Colonic mucosa (tissue), 4 donors: ENCODE measurements at regions of chr2 and their contacts with region 1.

Region 1: DNA sequence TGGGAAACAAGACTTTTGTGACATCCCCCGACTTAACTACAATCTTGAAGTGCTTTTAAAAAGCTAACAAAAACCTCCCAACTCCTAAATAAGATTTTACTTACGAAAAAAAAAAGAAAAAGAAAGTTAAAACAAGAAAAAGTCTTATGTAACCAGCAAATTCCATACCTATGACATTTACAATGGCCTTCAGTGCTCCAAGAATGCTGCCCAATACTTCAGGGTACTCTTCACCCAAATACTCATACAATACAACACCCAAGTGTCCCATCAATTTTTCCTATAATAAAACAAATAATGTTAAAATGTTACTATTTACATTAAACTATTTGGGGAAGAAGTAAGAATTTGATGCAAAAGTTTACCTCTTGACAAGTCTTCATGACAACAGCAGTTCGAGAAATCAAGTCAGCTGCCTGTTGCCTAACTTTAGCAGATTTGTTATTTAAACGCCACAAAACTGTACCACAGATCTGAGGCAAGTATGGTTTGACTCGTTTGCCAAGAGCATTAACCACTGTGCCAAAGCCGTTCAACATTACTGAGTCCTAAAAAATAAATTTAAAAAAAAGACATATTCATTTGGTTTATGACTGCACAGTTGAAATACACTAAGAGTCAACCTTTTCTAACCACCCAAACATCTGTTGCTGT is 34.8 kb downstream of the SF3B1 start:
- DNase-seq: no peak
- H3K4me3 ChIP-seq: no peak overlapping the region
- H3K27ac ChIP-seq: no peak overlapping the region
- H3K4me1 ChIP-seq: no peaks in the 10 kb centered on the region
- H3K27me3 ChIP-seq: no peaks in the 10 kb centered on the region
- CTCF ChIP-seq: no peak

Region 2: GRCh38 chr2:196783431-196784094 is 616.5 kb before region 1 on chr2:
- intact Hi-C with region 1: loop called (anchors 10 kb)
- DNase-seq: no peak
- H3K4me3 ChIP-seq: no peak overlapping the region
- H3K27ac ChIP-seq: no peak overlapping the region
- H3K4me1 ChIP-seq: no peaks in the 10 kb centered on the region
- H3K27me3 ChIP-seq: no peaks in the 10 kb centered on the region
- CTCF ChIP-seq: no peak

Region 3: DNA sequence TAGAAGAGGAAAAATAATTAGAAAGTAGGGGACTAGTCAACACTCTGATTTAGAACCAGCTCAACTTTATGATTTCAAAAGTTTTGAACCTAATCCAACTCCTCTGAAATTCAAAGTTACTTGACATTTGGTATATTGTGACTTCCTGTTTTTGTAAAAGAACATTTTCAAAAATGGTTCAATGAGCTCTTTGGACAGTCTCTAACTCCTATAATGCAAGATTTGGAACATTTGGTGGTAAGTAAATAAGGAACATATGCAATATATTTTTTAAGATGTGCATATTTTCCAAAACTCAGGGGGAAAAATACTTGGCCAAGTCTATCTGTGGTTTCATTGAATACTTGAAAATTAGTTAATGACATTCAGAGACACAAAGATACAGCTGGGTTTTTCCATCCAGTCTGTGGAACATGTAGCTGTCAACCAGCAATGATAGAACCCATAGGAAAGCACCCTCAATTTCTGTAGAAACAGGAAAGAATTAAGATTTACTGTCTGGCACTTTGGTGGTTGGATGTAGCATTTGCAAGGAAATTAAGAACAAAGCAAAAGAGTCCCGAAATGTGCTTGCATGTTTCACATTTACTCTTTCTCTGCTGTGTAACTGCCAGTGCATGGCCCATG is 72.4 kb before region 1 on chr2:
- intact Hi-C with region 1: no loop called
- DNase-seq: no peak
- H3K4me3 ChIP-seq: no peak overlapping the region
- H3K27ac ChIP-seq: no peak overlapping the region
- H3K4me1 ChIP-seq: no peaks in the 10 kb centered on the region
- H3K27me3 ChIP-seq: no peaks in the 10 kb centered on the region
- CTCF ChIP-seq: no peak

Region 4: DNA sequence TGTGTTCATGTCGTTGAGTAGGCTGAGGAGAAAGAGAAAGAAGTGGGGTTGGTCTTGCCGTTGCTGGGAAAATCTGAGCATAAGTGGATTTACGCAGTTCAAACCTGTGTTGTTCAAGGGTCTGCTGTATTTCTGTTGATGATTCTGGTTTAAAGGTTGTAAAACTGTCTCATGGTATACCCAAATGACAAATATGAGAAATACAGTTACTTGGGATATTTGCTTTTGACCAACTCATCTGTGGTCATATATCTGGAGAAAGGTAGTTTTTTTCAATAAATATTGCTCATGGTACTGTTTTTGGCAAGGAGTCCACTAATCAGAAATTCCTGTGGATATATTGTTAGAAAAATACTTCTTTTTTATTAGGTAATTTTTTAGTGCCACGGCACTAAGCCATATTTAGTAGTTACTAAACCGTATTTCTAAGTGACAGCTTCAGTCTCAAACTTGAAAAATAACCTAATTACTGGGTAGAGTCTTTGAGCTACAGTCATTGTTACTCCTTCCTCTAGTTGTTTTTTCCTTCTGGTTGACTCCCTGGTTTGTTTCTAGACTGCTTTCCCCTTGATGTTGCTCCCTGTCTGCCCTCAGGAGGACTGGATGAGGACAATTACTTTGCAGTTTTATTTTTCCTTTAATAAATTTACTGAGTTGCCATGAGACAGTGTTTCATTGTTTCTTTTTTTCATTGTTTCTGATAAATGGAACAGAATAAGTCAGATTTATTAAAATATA is 147.3 kb after region 1 on chr2:
- intact Hi-C with region 1: no loop called
- DNase-seq: no peak
- H3K4me3 ChIP-seq: no peak overlapping the region
- H3K27ac ChIP-seq: no peak overlapping the region
- H3K4me1 ChIP-seq: no peaks in the 10 kb centered on the region
- H3K27me3 ChIP-seq: no peaks in the 10 kb centered on the region
- CTCF ChIP-seq: no peak